Esophagus muscularis mucosa (tissue), 4 donors: ENCODE measurements at regions of chr15 and their contacts with region 1.

Region 1: DNA sequence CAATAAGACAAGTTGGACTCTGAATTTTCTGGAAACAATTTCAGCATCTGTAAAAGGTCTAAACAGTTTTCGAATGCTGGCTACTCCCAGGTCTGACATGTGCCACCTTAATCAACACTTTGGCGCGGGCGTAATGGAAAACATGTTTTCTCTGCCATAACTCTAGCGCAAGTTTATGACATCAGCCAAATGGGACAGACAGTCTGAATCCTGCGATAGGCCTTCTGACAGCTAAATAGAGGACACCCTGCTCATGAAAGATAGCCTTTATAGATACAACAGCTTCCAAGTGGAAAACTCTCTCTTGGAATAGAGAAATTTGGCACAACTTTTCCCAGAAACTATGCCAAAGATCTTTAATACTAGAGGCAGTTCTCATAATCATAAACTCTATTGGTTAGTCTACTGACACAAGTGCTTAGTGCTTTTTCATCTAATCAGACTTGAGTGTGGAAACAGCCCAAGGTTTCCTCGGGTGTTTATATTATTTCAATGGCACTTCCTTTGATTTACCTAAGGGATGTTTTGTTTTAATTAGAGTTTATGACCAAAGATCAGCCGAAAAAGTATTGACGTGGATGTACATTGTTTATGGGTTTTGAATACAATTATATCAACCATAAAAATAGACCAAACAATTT is 120.1 kb upstream of the DPH6 start:
- DNase-seq: no peak
- H3K4me3 ChIP-seq: no peak overlapping the region
- H3K27ac ChIP-seq: peak overlapping the region; percentile 55 to 66 (median 59)
- H3K4me1 ChIP-seq: peaks cover 15 to 48% (median 33%) of the 10 kb centered on the region in 4 donors
- H3K27me3 ChIP-seq: no peaks in the 10 kb centered on the region
- CTCF ChIP-seq: no peak
- EP300 ChIP-seq: no peak
- POLR2A ChIP-seq: no peak

Region 2: DNA sequence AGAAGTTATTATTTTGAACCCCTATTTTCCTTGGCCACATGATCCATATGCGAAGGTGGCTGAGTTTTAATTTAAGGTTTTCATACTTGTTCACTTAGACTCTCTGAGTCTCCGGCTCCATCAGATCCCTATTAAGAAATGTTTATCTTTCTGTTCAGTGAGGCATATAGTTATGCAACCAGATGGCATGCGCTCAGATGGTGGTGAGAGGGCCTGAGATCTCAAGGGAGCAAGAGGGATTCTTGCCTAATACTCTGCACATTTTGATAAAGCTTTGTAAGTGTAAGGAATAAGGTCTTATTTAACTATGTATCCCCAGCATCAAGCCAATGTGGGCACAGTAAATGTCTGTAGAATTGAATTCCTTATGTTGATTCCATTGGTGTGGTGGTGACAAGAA is 41.1 kb before region 1 on chr15:
- intact Hi-C with region 1: loop called (anchors 5 kb)
- DNase-seq: no peak
- H3K4me3 ChIP-seq: no peak overlapping the region
- H3K27ac ChIP-seq: peak overlapping the region; percentile 54 to 65 (median 56)
- H3K4me1 ChIP-seq: peaks cover 24 to 43% (median 36%) of the 10 kb centered on the region in 4 donors
- H3K27me3 ChIP-seq: no peaks in the 10 kb centered on the region
- CTCF ChIP-seq: no peak
- EP300 ChIP-seq: no peak
- POLR2A ChIP-seq: no peak

Region 3: DNA sequence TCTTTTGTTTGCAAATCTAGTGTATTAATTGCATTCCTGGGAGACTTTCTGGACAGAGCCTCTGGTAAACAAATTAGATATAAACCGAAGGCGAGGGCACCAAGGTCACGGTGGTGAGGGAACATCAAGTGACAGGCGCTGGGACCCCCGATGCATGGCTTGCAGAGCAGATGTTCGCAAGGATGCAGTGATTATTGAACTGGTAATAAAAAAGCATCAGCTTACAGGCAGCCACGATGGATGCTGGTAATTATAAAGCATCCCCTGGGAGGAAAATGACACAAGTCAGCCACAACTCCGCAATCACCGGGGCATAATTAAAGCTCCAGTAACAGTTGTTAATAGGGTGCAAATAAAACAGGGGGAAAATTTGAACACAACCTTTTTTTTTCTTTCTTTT is 111.0 kb after region 1 on chr15:
- intact Hi-C with region 1: no loop called
- DNase-seq: no peak
- H3K4me3 ChIP-seq: no peak overlapping the region
- H3K27ac ChIP-seq: no peak overlapping the region
- H3K4me1 ChIP-seq: peaks cover 0 to 6% (median 0%) of the 10 kb centered on the region in 4 donors
- H3K27me3 ChIP-seq: no peaks in the 10 kb centered on the region
- CTCF ChIP-seq: no peak
- EP300 ChIP-seq: no peak
- POLR2A ChIP-seq: no peak

Region 4: DNA sequence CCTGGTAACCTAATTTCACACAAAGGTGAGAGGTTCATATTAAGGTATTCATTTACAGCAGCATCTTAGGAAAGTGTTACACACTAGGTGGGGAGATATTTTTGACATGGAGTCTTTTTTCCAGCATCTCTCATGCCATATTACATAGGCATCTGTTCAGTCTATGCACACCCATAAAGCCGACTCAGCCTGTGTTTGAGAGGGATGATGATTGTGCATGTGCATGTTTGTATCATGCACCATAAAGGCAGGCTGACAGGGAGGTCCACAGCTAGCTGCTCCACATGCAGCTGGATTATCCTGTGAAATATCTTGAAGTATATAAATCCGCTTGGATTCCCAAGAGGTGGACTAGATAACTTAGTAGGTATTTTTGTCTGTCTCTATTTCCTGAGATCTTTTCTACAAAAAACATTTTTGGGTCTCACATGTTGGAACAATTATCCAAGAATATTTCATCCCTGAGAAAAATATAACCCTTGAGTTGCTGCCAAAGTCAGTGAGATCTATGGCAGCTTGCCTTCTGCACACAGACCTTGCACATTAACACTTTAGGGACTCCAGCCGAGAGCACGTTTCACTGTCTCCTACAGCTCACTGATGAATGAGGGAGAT is 168.3 kb after region 1 on chr15:
- intact Hi-C with region 1: no loop called
- DNase-seq: no peak
- H3K4me3 ChIP-seq: no peak overlapping the region
- H3K27ac ChIP-seq: no peak overlapping the region
- H3K4me1 ChIP-seq: peaks cover 8 to 28% (median 23%) of the 10 kb centered on the region in 4 donors
- H3K27me3 ChIP-seq: no peaks in the 10 kb centered on the region
- CTCF ChIP-seq: no peak
- EP300 ChIP-seq: no peak
- POLR2A ChIP-seq: no peak